AG04450 (cell line): ENCODE measurements at regions of chrX and their contacts with region 1.

Region 1: GRCh38 chrX:44992775-44993174 is 119.8 kb downstream of the KDM6A start:
- DNase-seq: no peak
- H3K4me3 ChIP-seq: no peak overlapping the region
- H3K27ac ChIP-seq: no peak overlapping the region
- H3K27me3 ChIP-seq: no peaks in the 10 kb centered on the region
- CTCF ChIP-seq: no peak

Region 2: DNA sequence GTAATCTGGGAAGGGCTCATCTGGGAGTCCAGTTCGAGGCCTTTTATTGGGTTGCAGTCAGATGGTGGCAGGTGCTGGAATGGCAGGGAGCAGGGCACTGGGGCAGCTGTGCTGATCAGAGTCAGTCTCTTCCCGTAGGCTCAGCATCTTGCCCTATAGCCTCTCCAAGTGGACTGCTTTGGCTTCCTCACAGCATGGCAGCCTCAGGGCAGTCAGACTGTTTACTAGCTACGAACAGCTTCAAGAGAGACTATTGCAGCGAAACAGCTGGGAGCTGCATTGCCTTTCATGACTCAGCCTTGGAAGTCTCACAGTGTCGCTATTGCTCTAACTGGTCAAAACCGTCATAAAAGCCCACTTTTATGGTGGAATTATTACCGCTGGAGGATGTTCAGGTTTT is 175.7 kb before region 1 on chrX:
- CTCF ChIA-PET with region 1: no interaction called
- POLR2A ChIA-PET with region 1: no interaction called
- DNase-seq: no peak
- H3K4me3 ChIP-seq: no peak overlapping the region
- H3K27ac ChIP-seq: no peak overlapping the region
- H3K27me3 ChIP-seq: no peaks in the 10 kb centered on the region
- CTCF ChIP-seq: no peak

Region 3: GRCh38 chrX:44914532-44915198 is 78.1 kb before region 1 on chrX:
- CTCF ChIA-PET with region 1: no interaction called
- POLR2A ChIA-PET with region 1: interaction called, 14 read pairs
- DNase-seq: no peak
- H3K4me3 ChIP-seq: 0 out of 2 replicates have a peak overlapping the region, but pooled peaks have one; percentile 2
- H3K27ac ChIP-seq: peak overlapping the region; percentile 31
- H3K27me3 ChIP-seq: no peaks in the 10 kb centered on the region
- CTCF ChIP-seq: no peak

Region 4: DNA sequence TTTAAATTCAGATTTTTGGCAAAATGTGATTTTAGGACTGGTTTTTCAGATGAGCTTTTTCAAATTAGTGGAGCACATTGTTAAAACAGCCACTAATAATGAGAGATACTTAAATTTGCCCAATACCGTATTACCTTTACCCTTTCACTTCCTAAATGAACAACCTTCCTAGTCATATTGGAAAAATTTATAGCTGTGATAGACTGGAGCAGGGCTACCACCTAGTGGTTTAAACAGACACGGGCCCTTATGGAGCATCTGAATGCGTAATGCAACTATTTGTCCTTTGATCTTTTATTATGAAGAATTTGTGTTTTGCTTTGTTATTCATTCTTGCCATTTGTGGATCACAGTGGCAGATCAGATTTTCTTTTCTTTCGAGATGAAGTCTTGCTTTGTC is 47.0 kb before region 1 on chrX:
- CTCF ChIA-PET with region 1: no interaction called
- POLR2A ChIA-PET with region 1: no interaction called
- DNase-seq: no peak
- H3K4me3 ChIP-seq: no peak overlapping the region
- H3K27ac ChIP-seq: no peak overlapping the region
- H3K27me3 ChIP-seq: no peaks in the 10 kb centered on the region
- CTCF ChIP-seq: 0 out of 2 replicates have a peak, but pooled peaks have one; percentile 9